Activated CD8-positive, alpha-beta T cell treated with anti-CD3 and anti-CD28 coated beads, Interleukin-2, amount 10 ng/mL, durations not matched to agents 7 days and 5 days (primary cell): ENCODE measurements at regions of chr6 and their contacts with region 1.

Region 1: GRCh38 chr6:13574149-13574570 is 241 bp upstream of the SIRT5 start:
- DNase-seq: peak; percentile 94
- ATAC-seq: peak; percentile 81
- H3K4me3 Mint-ChIP-seq: peak overlapping the region; percentile 93
- H3K27ac Mint-ChIP-seq: peak overlapping the region; percentile 98
- H3K4me1 Mint-ChIP-seq: peaks cover 20% of the 10 kb centered on the region
- H3K27me3 Mint-ChIP-seq: peaks cover 2% of the 10 kb centered on the region

Region 2: GRCh38 chr6:13328076-13328874 is 245.9 kb before region 1 on chr6 and contains the start of gene TBC1D7:
- CTCF ChIA-PET with region 1: interaction called, 62 read pairs
- POLR2A ChIA-PET with region 1: interaction called, 16 read pairs
- DNase-seq: peak; percentile 94
- ATAC-seq: peak; percentile 97
- H3K4me3 Mint-ChIP-seq: peak within 1 kb of the TSS; percentile 93
- H3K27ac Mint-ChIP-seq: peak within 1 kb of the TSS; percentile 95
- H3K4me1 Mint-ChIP-seq: peaks cover 30% of the 10 kb centered on the region
- H3K27me3 Mint-ChIP-seq: peaks cover 2% of the 10 kb centered on the region
- total RNA-seq, gene TBC1D7: 25.2 to 30.3 TPM

Region 3: GRCh38 chr6:13375360-13375878 is 198.7 kb before region 1 on chr6:
- CTCF ChIA-PET with region 1: interaction called, 10 read pairs
- POLR2A ChIA-PET with region 1: no interaction called
- DNase-seq: peak; percentile 50
- ATAC-seq: peak; percentile 69
- H3K4me3 Mint-ChIP-seq: no peak overlapping the region
- H3K27ac Mint-ChIP-seq: peak overlapping the region; percentile 28
- H3K4me1 Mint-ChIP-seq: peaks cover 20% of the 10 kb centered on the region
- H3K27me3 Mint-ChIP-seq: no peaks in the 10 kb centered on the region

Region 4: GRCh38 chr6:13487122-13488014 is 86.8 kb before region 1 on chr6 and contains the start of gene GFOD1:
- CTCF ChIA-PET with region 1: interaction called, 22 read pairs
- POLR2A ChIA-PET with region 1: interaction called, 4 read pairs
- DNase-seq: peak; percentile 82
- ATAC-seq: peak; percentile 87
- H3K4me3 Mint-ChIP-seq: peak within 1 kb of the TSS; percentile 84
- H3K27ac Mint-ChIP-seq: peak within 1 kb of the TSS; percentile 80
- H3K4me1 Mint-ChIP-seq: peaks cover 49% of the 10 kb centered on the region
- H3K27me3 Mint-ChIP-seq: peaks cover 12% of the 10 kb centered on the region
- total RNA-seq, gene GFOD1: 8.0 to 8.7 TPM

Region 5: DNA sequence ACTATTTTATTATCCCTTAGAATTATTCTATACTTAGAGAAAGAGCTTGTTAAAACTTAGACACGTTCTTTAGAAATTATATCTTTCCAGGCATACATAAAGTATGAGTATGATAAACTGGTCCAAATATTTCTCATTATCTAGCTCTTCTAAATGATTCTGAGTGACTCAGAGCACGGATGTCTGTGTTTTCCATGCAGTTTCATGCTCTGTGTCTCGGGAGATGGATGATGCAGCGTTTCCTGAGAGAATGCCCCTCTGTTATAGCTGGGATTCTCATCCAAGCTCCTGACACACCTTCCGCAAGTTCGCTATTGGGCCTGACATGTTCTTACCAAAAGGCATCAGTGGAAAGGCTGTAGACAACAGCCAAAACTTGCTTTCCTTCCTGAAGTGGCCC is 19.6 kb after region 1 on chr6:
- CTCF ChIA-PET with region 1: interaction called, 12 read pairs
- POLR2A ChIA-PET with region 1: interaction called, 3 read pairs
- DNase-seq: no peak
- ATAC-seq: no peak
- H3K4me3 Mint-ChIP-seq: no peak overlapping the region
- H3K27ac Mint-ChIP-seq: peak overlapping the region; percentile 19
- H3K4me1 Mint-ChIP-seq: no peaks in the 10 kb centered on the region
- H3K27me3 Mint-ChIP-seq: no peaks in the 10 kb centered on the region

Region 6: GRCh38 chr6:13711733-13712598 is 137.8 kb after region 1 on chr6 and contains the start of gene RANBP9:
- CTCF ChIA-PET with region 1: interaction called, 10 read pairs
- POLR2A ChIA-PET with region 1: interaction called, 3 read pairs
- DNase-seq: peak; percentile 90
- ATAC-seq: peak; percentile 86
- H3K4me3 Mint-ChIP-seq: peak within 1 kb of the TSS; percentile 94
- H3K27ac Mint-ChIP-seq: peak within 1 kb of the TSS; percentile 97
- H3K4me1 Mint-ChIP-seq: peaks cover 51% of the 10 kb centered on the region
- H3K27me3 Mint-ChIP-seq: no peaks in the 10 kb centered on the region
- total RNA-seq, gene RANBP9: 50.0 to 53.4 TPM